Activated CD4-positive, alpha-beta T cell treated with anti-CD3 and anti-CD28 coated beads for 36 hours (primary cell): ENCODE measurements at regions of chr7 and their contacts with region 1.

Region 1: DNA sequence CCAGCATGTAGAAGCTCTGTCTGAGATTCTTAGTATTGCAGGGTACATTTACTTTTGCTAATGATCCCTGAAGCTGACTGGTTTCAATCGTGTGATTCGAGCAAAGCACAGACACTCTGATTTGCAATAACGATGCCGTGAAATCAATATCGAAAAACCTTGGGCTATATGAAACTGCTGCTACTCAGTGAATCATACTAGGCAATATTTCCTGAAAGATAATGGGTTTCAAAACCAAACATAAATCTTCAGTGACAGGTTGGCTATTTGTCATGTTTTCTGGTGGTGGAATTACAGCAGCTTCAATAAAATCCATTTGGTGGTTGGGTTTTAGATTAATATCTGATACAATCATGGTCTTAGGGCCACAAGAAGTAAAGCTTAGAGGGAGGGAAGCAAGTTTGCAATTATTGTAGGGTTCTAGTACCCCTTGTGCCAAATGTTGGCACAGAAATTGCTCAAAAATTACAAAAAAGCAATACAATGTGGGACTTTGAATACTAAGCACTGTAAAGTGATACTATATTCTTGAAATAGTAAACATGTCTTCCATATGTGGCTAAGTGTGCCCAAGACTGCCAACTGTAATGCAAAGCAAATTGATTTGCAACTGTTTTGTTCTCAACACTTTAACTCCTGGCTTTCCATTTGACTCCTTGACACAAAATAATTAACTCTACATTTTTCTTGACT is 112.4 kb upstream of the JAZF1 start:
- DNase-seq: peak; percentile 22
- ATAC-seq: peak; percentile 92
- H3K4me3 Mint-ChIP-seq: no peak overlapping the region
- H3K27ac Mint-ChIP-seq: no peak overlapping the region
- H3K4me1 Mint-ChIP-seq: peaks cover 21% of the 10 kb centered on the region
- H3K27me3 Mint-ChIP-seq: peaks cover 19% of the 10 kb centered on the region

Region 2: DNA sequence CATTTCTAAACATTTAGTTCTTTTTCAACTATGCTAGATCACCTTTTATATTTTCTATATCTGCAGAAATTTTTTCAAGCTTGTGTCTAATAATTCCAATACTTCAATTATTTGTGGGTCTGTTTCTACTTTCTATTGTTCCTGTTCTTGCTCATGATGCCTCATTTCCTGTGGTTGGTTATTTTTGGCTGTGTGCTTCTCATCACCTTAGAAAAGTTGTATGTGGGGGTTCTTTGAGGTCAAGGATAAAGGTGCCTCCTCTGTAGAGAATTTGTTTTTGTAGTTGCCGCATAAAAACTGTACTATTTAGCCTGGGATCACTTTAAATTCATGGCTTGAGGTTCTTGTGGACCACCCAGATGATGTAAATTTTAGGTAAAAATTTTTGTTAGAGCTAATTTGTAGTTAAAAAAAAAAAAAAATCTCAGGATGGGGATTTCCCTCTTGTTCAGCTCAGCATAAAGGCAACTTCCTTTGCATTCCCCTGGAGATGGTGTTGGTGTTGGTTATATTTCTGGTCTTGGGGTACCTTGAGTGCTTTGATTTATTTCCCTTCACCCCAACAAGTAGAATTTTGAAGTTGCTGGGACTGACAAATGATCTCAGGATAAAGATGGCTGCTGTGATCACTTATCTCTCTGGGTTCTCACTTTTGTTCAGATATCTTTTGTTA is 85.4 kb before region 1 on chr7:
- CTCF ChIA-PET with region 1: no interaction called
- POLR2A ChIA-PET with region 1: no interaction called
- intact Hi-C with region 1: loop called (anchors 1 kb)
- DNase-seq: no peak
- ATAC-seq: peak; percentile 81
- H3K4me3 Mint-ChIP-seq: peak overlapping the region; percentile 16
- H3K27ac Mint-ChIP-seq: peak overlapping the region; percentile 18
- H3K4me1 Mint-ChIP-seq: peaks cover 38% of the 10 kb centered on the region
- H3K27me3 Mint-ChIP-seq: peaks cover 12% of the 10 kb centered on the region

Region 3: GRCh38 chr7:28329661-28330363 is 36.8 kb after region 1 on chr7:
- CTCF ChIA-PET with region 1: interaction called, 3 read pairs
- POLR2A ChIA-PET with region 1: no interaction called
- intact Hi-C with region 1: loop called (anchors 2 kb)
- DNase-seq: peak; percentile 26
- ATAC-seq: peak; percentile 56
- H3K4me3 Mint-ChIP-seq: peak overlapping the region; percentile 4
- H3K27ac Mint-ChIP-seq: no peak overlapping the region
- H3K4me1 Mint-ChIP-seq: peaks cover 36% of the 10 kb centered on the region
- H3K27me3 Mint-ChIP-seq: peaks cover 6% of the 10 kb centered on the region

Region 4: GRCh38 chr7:28442540-28443420 is 149.8 kb after region 1 on chr7:
- CTCF ChIA-PET with region 1: interaction called, 3 read pairs
- POLR2A ChIA-PET with region 1: no interaction called
- intact Hi-C with region 1: loop called (anchors 2 kb)
- DNase-seq: peak; percentile 10
- ATAC-seq: peak; percentile 84
- H3K4me3 Mint-ChIP-seq: no peak overlapping the region
- H3K27ac Mint-ChIP-seq: no peak overlapping the region
- H3K4me1 Mint-ChIP-seq: peaks cover 16% of the 10 kb centered on the region
- H3K27me3 Mint-ChIP-seq: peaks cover 48% of the 10 kb centered on the region